CD14-positive monocyte (primary cell): ENCODE measurements at regions of chr2 and their contacts with region 1.

Region 1: DNA sequence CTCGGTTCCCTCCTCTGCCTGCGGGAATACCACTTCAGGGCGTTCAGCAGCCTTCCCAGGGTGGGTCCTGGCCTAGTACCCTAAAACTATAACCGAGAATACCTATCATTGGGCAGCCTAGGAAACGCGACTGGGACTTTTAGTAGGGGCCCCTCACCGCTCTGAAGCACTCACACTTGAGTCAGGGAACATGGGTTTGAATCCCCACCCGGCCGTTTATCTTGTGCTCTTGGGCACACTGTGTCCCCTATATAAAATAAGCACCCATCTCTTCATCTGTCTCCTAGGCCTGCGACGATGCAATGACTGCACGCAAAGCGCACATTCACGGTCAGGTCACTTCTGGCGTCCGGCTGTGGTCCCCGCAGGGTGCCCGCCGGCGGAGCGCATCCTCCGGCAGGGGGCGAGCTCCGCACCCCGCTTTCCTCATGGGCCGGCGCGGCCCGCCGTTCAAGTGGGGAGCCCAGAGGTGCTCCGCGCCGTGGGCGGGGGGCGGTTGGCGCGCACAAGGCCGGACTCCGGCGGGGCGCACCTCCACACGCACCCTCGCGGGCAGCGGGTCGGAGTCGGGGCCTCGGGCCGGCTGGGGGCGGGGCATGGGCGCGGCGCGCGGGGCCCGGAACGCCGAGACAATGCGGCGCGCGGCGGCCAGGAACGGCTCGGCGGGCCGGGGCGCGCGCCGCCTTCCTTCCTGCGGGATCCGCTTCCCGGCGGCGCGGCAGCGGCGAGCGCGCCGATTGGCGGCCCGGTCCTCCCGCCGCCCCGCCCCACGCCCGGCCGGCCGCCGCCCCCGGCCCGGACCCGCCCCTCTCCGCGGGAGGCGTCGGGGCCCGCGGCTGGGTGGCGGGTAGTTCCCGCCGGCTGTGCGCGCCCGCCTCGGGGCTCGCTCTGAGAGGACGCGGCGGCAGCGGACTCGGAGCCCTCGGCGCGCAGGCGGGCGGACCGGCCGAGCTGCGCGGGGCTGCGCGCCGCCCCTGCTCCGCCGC is at the start of gene ASAP2:
- DNase-seq: peak; percentile 51 to 70 (median 56)
- H3K4me3 ChIP-seq: peak within 1 kb of the TSS; percentile 26 to 77 (median 64)
- H3K4me3 Mint-ChIP-seq: peak within 1 kb of the TSS; percentile 74 to 87
- H3K27ac ChIP-seq: no peak within 1 kb of the TSS
- H3K27ac Mint-ChIP-seq: peak within 1 kb of the TSS in 2 of 7 donors; percentile 47 to 68
- H3K4me1 ChIP-seq: peaks cover 16 to 20% of the 10 kb centered on the region in 2 donors
- H3K4me1 Mint-ChIP-seq: peaks cover 14% of the 10 kb centered on the region
- H3K27me3 ChIP-seq: peaks cover 15 to 21% of the 10 kb centered on the region in 2 donors
- H3K27me3 Mint-ChIP-seq: peaks cover 19 to 36% (median 34%) of the 10 kb centered on the region in 3 donors
- CTCF ChIP-seq: peak; percentile 81
- polyA plus RNA-seq, gene ASAP2: 0.08 to 1.1 (median 0.20) TPM

Region 2: GRCh38 chr2:9261231-9261883 is 55.1 kb after region 1 on chr2:
- intact Hi-C with region 1: loop called (anchors 5 to 10 kb)
- DNase-seq: peak; percentile 29 to 70 (median 51)
- H3K4me3 ChIP-seq: peak overlapping the region in 1 of 3 experiments; percentile 44
- H3K4me3 Mint-ChIP-seq: peak overlapping the region; percentile 62 to 77
- H3K27ac ChIP-seq: peak overlapping the region; percentile 64 to 69
- H3K27ac Mint-ChIP-seq: peak overlapping the region; percentile 79 to 95 (median 92)
- H3K4me1 ChIP-seq: peaks cover 55 to 61% of the 10 kb centered on the region in 2 donors
- H3K4me1 Mint-ChIP-seq: peaks cover 58% of the 10 kb centered on the region
- H3K27me3 ChIP-seq: no peaks in the 10 kb centered on the region
- H3K27me3 Mint-ChIP-seq: peaks cover 0 to 3% (median 1%) of the 10 kb centered on the region in 3 donors
- CTCF ChIP-seq: no peak